Sigmoid colon (tissue), 7 donors: ENCODE measurements at regions of chr17 and their contacts with region 1.

Region 1: GRCh38 chr17:15999439-16000350 is at the starts of genes TTC19 and ZSWIM7:
- DNase-seq: peak; percentile 99
- H3K4me3 ChIP-seq: peak within 1 kb of the TSS; percentile 61 to 82 (median 72)
- H3K27ac ChIP-seq: peak within 1 kb of the TSS; percentile 88 to 98 (median 96)
- H3K4me1 ChIP-seq: peaks cover 0 to 27% (median 17%) of the 10 kb centered on the region in 4 donors
- H3K27me3 ChIP-seq: no peaks in the 10 kb centered on the region
- CTCF ChIP-seq: no peak
- EP300 ChIP-seq: peak in 1 of 4 donors; percentile 72
- POLR2A ChIP-seq: peak; percentile 82 to 85
- total RNA-seq, gene TTC19: 41.0 to 59.1 (median 42.8) TPM
- total RNA-seq, gene ZSWIM7: 13.0 to 25.8 (median 18.3) TPM

Region 2: GRCh38 chr17:15944759-15945529 is 54.8 kb before region 1 on chr17 and contains the start of gene ADORA2B:
- intact Hi-C with region 1: loop called (anchors 2 kb)
- DNase-seq: peak; percentile 78
- H3K4me3 ChIP-seq: peak within 1 kb of the TSS; percentile 33 to 66 (median 52)
- H3K27ac ChIP-seq: peak within 1 kb of the TSS in 3 of 4 donors; percentile 63 to 77 (median 69)
- H3K4me1 ChIP-seq: peaks cover 0 to 38% (median 31%) of the 10 kb centered on the region in 4 donors
- H3K27me3 ChIP-seq: peaks cover 0 to 3% (median 0%) of the 10 kb centered on the region in 3 donors
- CTCF ChIP-seq: peak in 1 of 4 experiments; percentile 45
- EP300 ChIP-seq: no peak
- POLR2A ChIP-seq: no peak
- total RNA-seq, gene ADORA2B: 2.2 to 5.4 (median 3.9) TPM

Region 3: GRCh38 chr17:16100737-16101400 is 101.2 kb after region 1 on chr17:
- intact Hi-C with region 1: loop called (anchors 5 kb)
- DNase-seq: no peak
- H3K4me3 ChIP-seq: no peak overlapping the region
- H3K27ac ChIP-seq: no peak overlapping the region
- H3K4me1 ChIP-seq: no peaks in the 10 kb centered on the region
- H3K27me3 ChIP-seq: no peaks in the 10 kb centered on the region
- CTCF ChIP-seq: peak in 1 of 4 experiments; percentile 4
- EP300 ChIP-seq: no peak
- POLR2A ChIP-seq: no peak

Region 4: DNA sequence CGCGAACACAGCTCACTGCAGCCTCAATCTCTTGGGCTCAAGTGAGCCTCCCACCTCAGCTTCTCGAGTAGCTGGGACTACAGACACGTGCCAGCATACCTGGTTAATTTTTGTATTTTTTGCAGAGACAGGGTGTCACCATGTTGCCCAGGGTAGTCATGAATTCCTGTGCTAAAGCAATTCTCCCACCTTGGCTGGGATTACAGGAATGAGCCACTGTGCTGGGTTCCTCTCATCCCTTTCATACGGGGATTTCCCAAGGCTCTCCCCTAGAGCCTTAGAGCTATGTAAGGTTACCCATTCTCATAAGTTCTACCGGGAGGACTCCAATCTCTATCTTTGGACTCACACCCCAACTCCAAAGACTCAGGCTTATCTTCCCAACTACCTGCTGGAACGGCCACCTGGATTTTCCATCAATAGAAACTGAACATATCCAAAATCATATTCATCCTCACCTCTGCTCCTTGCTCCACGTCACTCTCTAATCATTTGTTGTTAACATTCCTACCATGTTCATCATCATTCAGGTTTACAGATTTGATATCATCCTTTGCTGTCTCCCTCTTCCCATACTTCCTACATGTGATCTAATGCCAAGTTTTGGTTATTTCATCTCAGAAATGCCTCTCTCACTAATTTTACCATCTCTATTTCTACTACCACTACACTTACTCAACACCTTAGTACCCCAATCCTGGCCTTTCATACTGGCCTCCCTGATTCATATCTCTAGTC is 123.2 kb after region 1 on chr17:
- intact Hi-C with region 1: no loop called
- DNase-seq: no peak
- H3K4me3 ChIP-seq: no peak overlapping the region
- H3K27ac ChIP-seq: peak overlapping the region in 2 of 4 donors; percentile 13 to 54
- H3K4me1 ChIP-seq: peaks cover 0 to 6% (median 2%) of the 10 kb centered on the region in 4 donors
- H3K27me3 ChIP-seq: no peaks in the 10 kb centered on the region
- CTCF ChIP-seq: no peak
- EP300 ChIP-seq: no peak
- POLR2A ChIP-seq: no peak

Region 5: DNA sequence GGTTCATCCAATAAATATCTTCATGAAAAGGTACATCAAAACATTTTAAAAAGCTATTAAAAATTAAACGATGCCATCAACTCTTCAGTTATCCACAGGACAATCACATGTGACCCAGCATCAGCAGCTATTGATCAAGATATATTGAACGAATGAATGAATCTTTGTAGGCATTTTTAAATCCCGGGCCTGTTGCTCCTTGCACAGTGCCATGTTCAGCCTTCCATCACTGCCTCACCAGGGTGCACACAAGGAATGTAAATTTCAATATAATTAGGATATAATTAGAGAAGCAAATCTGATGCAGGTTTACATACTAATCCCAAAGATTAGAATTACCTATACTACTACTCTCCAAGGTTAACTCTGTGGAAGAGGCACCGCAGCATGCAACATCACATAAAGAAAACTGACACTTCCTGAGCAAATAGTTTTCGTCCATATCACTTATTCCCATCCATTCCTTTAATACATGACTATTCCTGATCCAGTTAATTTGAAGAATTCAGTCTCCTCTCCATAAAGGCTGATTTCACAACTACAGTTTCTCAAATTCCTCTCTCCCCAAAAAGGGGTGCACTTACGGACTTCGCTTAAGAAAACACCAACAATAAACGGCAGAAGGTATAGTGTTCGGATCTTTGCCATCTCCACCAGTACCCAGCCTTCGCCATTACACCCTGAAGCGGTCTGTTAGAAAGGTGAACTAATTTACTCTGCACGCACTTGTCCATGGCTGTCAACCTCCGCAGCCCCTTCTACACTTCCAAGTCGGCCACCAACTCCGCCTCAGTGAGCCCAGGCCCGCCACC is 214.7 kb after region 1 on chr17:
- intact Hi-C with region 1: loop called (anchors 5 kb)
- DNase-seq: no peak
- H3K4me3 ChIP-seq: peak overlapping the region; percentile 82 to 95 (median 92)
- H3K27ac ChIP-seq: peak overlapping the region; percentile 93 to 96 (median 95)
- H3K4me1 ChIP-seq: peaks cover 0 to 59% (median 41%) of the 10 kb centered on the region in 4 donors
- H3K27me3 ChIP-seq: no peaks in the 10 kb centered on the region
- CTCF ChIP-seq: no peak
- EP300 ChIP-seq: no peak
- POLR2A ChIP-seq: no peak